Posterior vena cava (tissue), 2 donors: ENCODE measurements at regions of chr1 and their contacts with region 1.

Region 1: DNA sequence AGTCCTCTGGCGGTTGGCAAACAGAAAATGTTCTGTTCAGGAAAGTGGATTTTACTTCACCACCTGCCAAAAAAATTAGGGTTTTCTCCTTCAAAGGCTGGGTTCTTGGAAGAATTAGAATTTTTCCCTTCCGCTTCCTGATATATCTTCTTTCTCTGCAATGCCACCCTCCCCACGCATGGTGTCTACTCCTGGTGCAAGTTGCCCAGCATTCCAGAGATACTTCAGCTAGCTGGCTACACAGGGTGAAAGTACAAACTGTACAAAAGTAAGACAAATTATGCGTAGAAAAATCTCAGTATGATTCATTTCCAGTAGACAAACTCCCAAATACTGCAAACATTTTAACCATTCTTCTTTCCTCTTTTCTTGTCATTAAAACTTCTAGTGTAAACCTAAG is 430.1 kb upstream of the ESRRG start:
- DNase-seq: no peak

Region 2: GRCh38 chr1:217135987-217136894 is 17.1 kb before region 1 on chr1:
- intact Hi-C with region 1: loop called in 1 of 2 experiments (anchors 2 kb)
- DNase-seq: no peak